Activated naive CD4-positive, alpha-beta T cell treated with anti-CD3 and anti-CD28 coated beads for 36 hours (primary cell): ENCODE measurements at regions of chr2 and their contacts with region 1.

Region 1: GRCh38 chr2:25376750-25377621 is 35.3 kb upstream of the DNMT3A start:
- DNase-seq: peak; percentile 96
- H3K4me3 Mint-ChIP-seq: peak overlapping the region; percentile 64
- H3K27ac Mint-ChIP-seq: peak overlapping the region; percentile 96
- H3K4me1 Mint-ChIP-seq: peaks cover 28% of the 10 kb centered on the region
- H3K27me3 Mint-ChIP-seq: no peaks in the 10 kb centered on the region

Region 2: GRCh38 chr2:25165992-25166875 is 210.8 kb before region 1 on chr2:
- CTCF ChIA-PET with region 1: no interaction called
- intact Hi-C with region 1: loop called (anchors 5 kb)
- DNase-seq: peak; percentile 73
- H3K4me3 Mint-ChIP-seq: no peak overlapping the region
- H3K27ac Mint-ChIP-seq: no peak overlapping the region
- H3K4me1 Mint-ChIP-seq: peaks cover 21% of the 10 kb centered on the region
- H3K27me3 Mint-ChIP-seq: peaks cover 30% of the 10 kb centered on the region

Region 3: GRCh38 chr2:25309402-25309801 is 67.6 kb before region 1 on chr2:
- CTCF ChIA-PET with region 1: interaction called, 40 read pairs
- intact Hi-C with region 1: loop called (anchors 1 kb)
- DNase-seq: peak; percentile 81
- H3K4me3 Mint-ChIP-seq: no peak overlapping the region
- H3K27ac Mint-ChIP-seq: peak overlapping the region; percentile 44
- H3K4me1 Mint-ChIP-seq: peaks cover 82% of the 10 kb centered on the region
- H3K27me3 Mint-ChIP-seq: no peaks in the 10 kb centered on the region

Region 4: GRCh38 chr2:25362049-25362433 is 14.9 kb before region 1 on chr2:
- CTCF ChIA-PET with region 1: interaction called, 54 read pairs
- intact Hi-C with region 1: loop called (anchors 1 kb)
- DNase-seq: peak; percentile 98
- H3K4me3 Mint-ChIP-seq: peak overlapping the region; percentile 82
- H3K27ac Mint-ChIP-seq: peak overlapping the region; percentile 94
- H3K4me1 Mint-ChIP-seq: peaks cover 11% of the 10 kb centered on the region
- H3K27me3 Mint-ChIP-seq: no peaks in the 10 kb centered on the region

Region 5: DNA sequence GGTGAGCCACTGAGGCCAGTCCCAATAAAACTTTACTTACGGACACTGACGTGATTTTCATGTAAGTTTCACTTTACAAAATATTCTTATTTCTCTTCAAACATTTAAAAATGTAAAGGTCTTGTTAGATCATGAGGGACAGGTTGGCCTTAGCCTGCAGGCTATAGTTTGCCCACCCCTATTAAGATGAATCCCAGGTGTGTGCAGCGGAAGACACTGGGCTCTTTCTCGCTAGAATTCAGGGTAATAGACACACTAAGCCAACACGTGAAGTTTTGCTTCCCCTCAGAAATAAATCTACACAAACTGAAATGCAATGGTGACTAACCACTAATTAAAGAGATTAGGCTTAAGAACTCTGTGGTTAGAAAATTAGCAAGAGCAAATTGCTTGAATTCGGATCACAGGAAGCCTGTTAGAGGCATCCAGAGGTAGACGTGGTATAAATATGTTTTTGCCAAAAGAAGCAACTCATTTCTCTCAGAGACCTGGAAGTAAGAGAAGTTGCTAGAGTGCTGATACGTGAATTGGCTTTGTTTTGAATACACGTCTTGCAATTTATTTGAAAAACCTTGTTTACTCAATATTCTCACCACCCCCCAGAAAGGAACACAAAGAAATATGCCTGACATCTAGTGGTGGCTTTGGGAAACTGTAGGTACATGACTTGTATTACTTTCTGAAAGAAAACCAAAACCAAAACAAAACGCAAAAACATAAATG is 144.8 kb after region 1 on chr2:
- CTCF ChIA-PET with region 1: interaction called, 7 read pairs
- intact Hi-C with region 1: loop called (anchors 1 kb)
- DNase-seq: peak; percentile 53
- H3K4me3 Mint-ChIP-seq: peak overlapping the region; percentile 11
- H3K27ac Mint-ChIP-seq: peak overlapping the region; percentile 64
- H3K4me1 Mint-ChIP-seq: peaks cover 8% of the 10 kb centered on the region
- H3K27me3 Mint-ChIP-seq: no peaks in the 10 kb centered on the region

Region 6: DNA sequence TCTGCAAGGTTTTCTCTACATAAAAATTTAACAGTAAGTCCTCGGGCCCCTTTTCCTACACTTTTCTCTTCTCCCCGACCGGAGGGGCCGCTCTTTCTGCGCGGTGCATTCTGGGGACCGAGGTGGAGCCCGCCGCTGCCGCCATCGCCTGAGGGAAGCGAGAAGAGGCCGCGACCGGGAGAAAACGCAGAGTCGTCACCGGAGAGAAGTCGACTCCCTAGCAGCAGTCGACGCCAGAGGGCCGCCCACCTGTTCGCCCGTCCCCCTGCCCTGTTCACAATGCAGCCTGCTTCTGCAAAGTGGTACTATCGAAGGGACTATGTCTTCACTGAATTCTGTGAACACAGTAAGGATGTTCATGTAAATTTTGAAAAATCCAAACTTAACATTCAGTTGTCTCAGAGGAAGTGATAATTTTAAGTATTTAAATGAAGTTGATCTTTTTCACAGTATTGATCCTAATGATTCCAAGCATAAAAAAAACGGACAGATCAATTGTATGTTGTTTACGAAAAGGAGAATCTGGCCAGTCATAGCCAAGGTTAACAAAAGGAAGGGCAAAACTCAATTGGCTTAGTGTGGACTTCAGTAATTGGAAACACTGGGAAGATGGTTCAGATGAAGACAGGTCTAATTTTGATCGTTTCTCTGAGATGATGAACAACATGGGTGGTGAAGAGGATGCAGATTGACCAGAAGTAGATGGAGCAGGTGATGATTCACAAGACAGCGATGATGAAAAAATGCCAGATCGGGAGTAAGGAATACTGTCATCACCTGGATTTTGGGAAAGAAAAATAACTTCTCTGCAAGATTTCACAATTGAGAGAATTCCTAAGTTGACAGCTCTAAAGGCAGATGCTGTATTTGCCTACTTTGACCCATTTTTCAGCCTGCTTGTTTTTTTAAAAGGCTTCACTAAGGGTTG is 445.5 kb after region 1 on chr2:
- CTCF ChIA-PET with region 1: no interaction called
- intact Hi-C with region 1: loop called (anchors 1 kb)
- DNase-seq: peak; percentile 83
- H3K4me3 Mint-ChIP-seq: peak overlapping the region; percentile 71
- H3K27ac Mint-ChIP-seq: peak overlapping the region; percentile 52
- H3K4me1 Mint-ChIP-seq: peaks cover 63% of the 10 kb centered on the region
- H3K27me3 Mint-ChIP-seq: no peaks in the 10 kb centered on the region